CD4-positive, alpha-beta memory T cell (primary cell): ENCODE measurements at regions of chr2 and their contacts with region 1.

Region 1: GRCh38 chr2:62456721-62457539 is 49.1 kb downstream of the TMEM17 start:
- DNase-seq: peak in 4 of 5 donors; percentile 50 to 65 (median 54)
- H3K4me3 ChIP-seq: peak overlapping the region in 1 of 2 donors; percentile 24
- H3K4me3 Mint-ChIP-seq: peak overlapping the region in 7 of 8 donors; percentile 24 to 70 (median 50)
- H3K27ac ChIP-seq: no peak overlapping the region
- H3K27ac Mint-ChIP-seq: peak overlapping the region in 1 of 7 donors; percentile 66
- H3K4me1 ChIP-seq: peaks cover 4% of the 10 kb centered on the region
- H3K4me1 Mint-ChIP-seq: no peaks in the 10 kb centered on the region
- H3K27me3 ChIP-seq: no peaks in the 10 kb centered on the region
- H3K27me3 Mint-ChIP-seq: peaks cover 3 to 4% of the 10 kb centered on the region in 2 donors

Region 2: GRCh38 chr2:62443886-62444285 is 13.0 kb before region 1 on chr2:
- CTCF ChIA-PET with region 1: interaction called, 17 read pairs
- POLR2A ChIA-PET with region 1: no interaction called
- intact Hi-C with region 1: no loop called
- DNase-seq: no peak
- H3K4me3 ChIP-seq: no peak overlapping the region
- H3K4me3 Mint-ChIP-seq: no peak overlapping the region
- H3K27ac ChIP-seq: no peak overlapping the region
- H3K27ac Mint-ChIP-seq: no peak overlapping the region
- H3K4me1 ChIP-seq: no peaks in the 10 kb centered on the region
- H3K4me1 Mint-ChIP-seq: no peaks in the 10 kb centered on the region
- H3K27me3 ChIP-seq: no peaks in the 10 kb centered on the region
- H3K27me3 Mint-ChIP-seq: peaks cover 0 to 1% of the 10 kb centered on the region in 2 donors

Region 3: DNA sequence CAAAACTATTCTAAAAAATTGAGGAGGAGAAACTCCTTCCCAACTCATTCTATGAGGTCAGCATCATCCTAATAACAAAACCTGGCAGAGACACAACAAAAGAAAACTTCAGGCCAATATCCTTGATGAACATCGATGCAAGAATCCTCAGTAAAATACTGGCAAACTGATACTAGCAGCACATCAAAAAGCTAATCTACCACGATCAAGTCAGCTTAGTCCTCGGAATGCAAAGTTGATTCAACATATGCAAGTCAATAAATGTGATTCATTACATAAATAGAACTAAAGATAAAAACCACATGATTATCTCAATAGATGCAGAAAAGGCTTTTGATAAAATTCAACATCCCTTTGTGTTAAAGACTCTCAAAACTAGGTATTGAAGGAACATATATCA is 311.7 kb after region 1 on chr2:
- CTCF ChIA-PET with region 1: interaction called, 207 read pairs
- POLR2A ChIA-PET with region 1: no interaction called
- intact Hi-C with region 1: no loop called
- DNase-seq: no peak
- H3K4me3 ChIP-seq: no peak overlapping the region
- H3K4me3 Mint-ChIP-seq: no peak overlapping the region
- H3K27ac ChIP-seq: no peak overlapping the region
- H3K27ac Mint-ChIP-seq: no peak overlapping the region
- H3K4me1 ChIP-seq: no peaks in the 10 kb centered on the region
- H3K4me1 Mint-ChIP-seq: peaks cover 0 to 13% (median 6%) of the 10 kb centered on the region in 4 donors
- H3K27me3 ChIP-seq: no peaks in the 10 kb centered on the region
- H3K27me3 Mint-ChIP-seq: no peaks in the 10 kb centered on the region

Region 4: DNA sequence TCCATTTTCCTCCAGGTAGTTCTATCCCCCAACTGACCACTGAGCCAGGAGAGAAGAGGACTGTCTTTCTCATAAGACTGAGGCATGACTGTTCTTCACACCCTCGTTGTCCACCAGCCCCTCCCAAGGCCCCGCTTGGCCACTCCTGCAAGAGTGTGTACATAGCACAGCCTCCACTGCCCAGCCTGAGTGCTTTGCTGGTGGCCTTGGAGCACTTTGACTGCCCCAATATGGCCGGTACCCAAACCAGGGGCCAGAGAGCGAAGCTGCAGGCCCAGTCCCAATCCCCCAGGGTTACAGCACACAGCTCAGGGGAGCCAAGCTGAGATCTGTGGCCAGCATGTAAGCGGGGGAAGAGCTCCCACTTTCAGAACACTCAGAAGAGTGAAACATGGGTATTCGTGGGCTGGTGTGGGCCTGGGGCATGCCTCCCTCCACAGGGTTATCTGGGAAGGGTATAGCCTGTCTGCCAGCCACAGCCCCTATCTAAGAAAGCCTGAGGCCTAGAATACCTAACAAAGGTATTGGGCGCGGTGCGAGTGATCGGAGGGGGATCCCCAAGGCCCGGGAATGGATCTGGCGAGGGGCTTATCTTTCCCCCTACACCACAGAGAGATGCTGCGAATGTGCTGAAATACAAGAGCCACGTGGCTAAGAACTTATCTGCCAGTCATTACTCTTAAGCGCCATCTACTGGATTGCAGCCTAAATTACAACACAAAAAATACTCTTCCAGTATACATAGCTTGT is 967.6 kb after region 1 on chr2:
- CTCF ChIA-PET with region 1: interaction called, 17 read pairs
- POLR2A ChIA-PET with region 1: no interaction called
- intact Hi-C with region 1: no loop called
- DNase-seq: peak in 4 of 5 donors; percentile 30 to 43 (median 36)
- H3K4me3 ChIP-seq: no peak overlapping the region
- H3K4me3 Mint-ChIP-seq: no peak overlapping the region
- H3K27ac ChIP-seq: no peak overlapping the region
- H3K27ac Mint-ChIP-seq: no peak overlapping the region
- H3K4me1 ChIP-seq: no peaks in the 10 kb centered on the region
- H3K4me1 Mint-ChIP-seq: peaks cover 0 to 4% (median 2%) of the 10 kb centered on the region in 4 donors
- H3K27me3 ChIP-seq: no peaks in the 10 kb centered on the region
- H3K27me3 Mint-ChIP-seq: no peaks in the 10 kb centered on the region

Region 5: GRCh38 chr2:63569740-63570139 is 1112.8 kb after region 1 on chr2:
- CTCF ChIA-PET with region 1: no interaction called
- POLR2A ChIA-PET with region 1: no interaction called
- intact Hi-C with region 1: no loop called
- DNase-seq: no peak
- H3K4me3 ChIP-seq: no peak overlapping the region
- H3K4me3 Mint-ChIP-seq: no peak overlapping the region
- H3K27ac ChIP-seq: no peak overlapping the region
- H3K27ac Mint-ChIP-seq: no peak overlapping the region
- H3K4me1 ChIP-seq: no peaks in the 10 kb centered on the region
- H3K4me1 Mint-ChIP-seq: no peaks in the 10 kb centered on the region
- H3K27me3 ChIP-seq: no peaks in the 10 kb centered on the region
- H3K27me3 Mint-ChIP-seq: no peaks in the 10 kb centered on the region

Region 6: GRCh38 chr2:63861220-63861822 is 1404.4 kb after region 1 on chr2:
- CTCF ChIA-PET with region 1: interaction called, 3 read pairs
- POLR2A ChIA-PET with region 1: no interaction called
- intact Hi-C with region 1: loop called (anchors 5 kb)
- DNase-seq: peak; percentile 65 to 73 (median 67)
- H3K4me3 ChIP-seq: no peak overlapping the region
- H3K4me3 Mint-ChIP-seq: no peak overlapping the region
- H3K27ac ChIP-seq: no peak overlapping the region
- H3K27ac Mint-ChIP-seq: peak overlapping the region in 6 of 7 donors; percentile 10 to 78 (median 37)
- H3K4me1 ChIP-seq: peaks cover 23% of the 10 kb centered on the region
- H3K4me1 Mint-ChIP-seq: peaks cover 26 to 40% (median 29%) of the 10 kb centered on the region in 4 donors
- H3K27me3 ChIP-seq: no peaks in the 10 kb centered on the region
- H3K27me3 Mint-ChIP-seq: no peaks in the 10 kb centered on the region